ENCODE measurements at regions of chr13 and their contacts with region 1.

Region 1: GRCh38 chr13:27826379-27827353 is 34.4 kb downstream of the GSX1 start:
- DNase-seq: peak; percentile 83
- ATAC-seq: peak; percentile 93
- H3K4me3 ChIP-seq: peak overlapping the region; percentile 21
- H3K27ac ChIP-seq: no peak overlapping the region
- H3K4me1 ChIP-seq: peaks cover 16% of the 10 kb centered on the region
- H3K27me3 ChIP-seq: peaks cover 81% of the 10 kb centered on the region
- CTCF ChIP-seq: peak; percentile 95

Region 2: GRCh38 chr13:27374650-27375049 is 452.0 kb before region 1 on chr13:
- intact Hi-C with region 1: loop called (anchors 10 kb)
- DNase-seq: peak; percentile 58
- ATAC-seq: peak; percentile 92 to 93
- H3K4me3 ChIP-seq: no peak overlapping the region
- H3K27ac ChIP-seq: no peak overlapping the region
- H3K4me1 ChIP-seq: peaks cover 8% of the 10 kb centered on the region
- H3K27me3 ChIP-seq: peaks cover 5% of the 10 kb centered on the region
- CTCF ChIP-seq: peak; percentile 76

Region 3: DNA sequence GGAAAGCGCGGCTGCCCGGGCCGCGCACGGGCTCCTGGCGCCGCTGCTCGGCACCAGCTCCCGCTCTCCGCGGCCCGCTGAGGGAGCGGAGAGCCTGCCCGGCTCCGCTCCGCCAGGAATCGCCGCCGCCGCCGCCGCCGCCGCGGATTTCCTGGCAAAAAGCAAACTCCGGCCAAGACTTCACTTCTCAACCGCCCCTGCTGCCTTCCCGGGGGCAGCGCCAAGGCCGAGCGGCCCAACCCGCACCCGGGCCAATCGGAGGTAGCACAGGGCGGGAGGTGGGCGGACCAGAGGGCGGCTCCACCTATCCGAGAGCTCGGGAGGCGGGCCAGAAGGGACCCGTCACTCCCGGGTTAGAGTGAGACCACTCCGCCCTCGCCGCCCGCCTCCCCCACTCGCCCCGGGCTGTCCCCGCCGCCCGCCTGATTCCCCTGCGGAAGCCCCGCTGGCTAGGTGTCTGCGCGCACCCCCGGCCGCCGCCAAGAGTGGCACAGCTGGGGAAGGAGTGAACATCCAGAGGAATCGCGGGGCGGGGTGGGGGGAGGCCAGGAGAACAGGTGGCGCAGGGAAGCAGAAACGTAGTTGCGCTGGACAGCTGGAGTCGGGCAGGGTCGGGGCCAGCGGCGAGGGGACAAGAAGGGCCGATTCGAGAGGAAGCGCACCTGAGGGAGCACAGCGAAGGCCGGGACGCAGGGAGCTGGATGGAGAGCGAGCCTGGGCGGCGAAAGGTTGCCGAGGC is 206.1 kb before region 1 on chr13 and contains the start of gene LNX2:
- intact Hi-C with region 1: no loop called
- DNase-seq: peak; percentile 98
- ATAC-seq: peak; percentile 88 to 96
- H3K4me3 ChIP-seq: peak within 1 kb of the TSS; percentile 91
- H3K27ac ChIP-seq: peak within 1 kb of the TSS; percentile 96
- H3K4me1 ChIP-seq: peaks cover 51% of the 10 kb centered on the region
- H3K27me3 ChIP-seq: no peaks in the 10 kb centered on the region
- CTCF ChIP-seq: no peak
- total RNA-seq, gene LNX2: 29.7 TPM

Region 4: GRCh38 chr13:27644302-27644701 is 182.4 kb before region 1 on chr13:
- intact Hi-C with region 1: no loop called
- DNase-seq: no peak
- ATAC-seq: peak in 1 of 2 donors; percentile 53
- H3K4me3 ChIP-seq: no peak overlapping the region
- H3K27ac ChIP-seq: no peak overlapping the region
- H3K4me1 ChIP-seq: peaks cover 16% of the 10 kb centered on the region
- H3K27me3 ChIP-seq: no peaks in the 10 kb centered on the region
- CTCF ChIP-seq: no peak

Region 5: DNA sequence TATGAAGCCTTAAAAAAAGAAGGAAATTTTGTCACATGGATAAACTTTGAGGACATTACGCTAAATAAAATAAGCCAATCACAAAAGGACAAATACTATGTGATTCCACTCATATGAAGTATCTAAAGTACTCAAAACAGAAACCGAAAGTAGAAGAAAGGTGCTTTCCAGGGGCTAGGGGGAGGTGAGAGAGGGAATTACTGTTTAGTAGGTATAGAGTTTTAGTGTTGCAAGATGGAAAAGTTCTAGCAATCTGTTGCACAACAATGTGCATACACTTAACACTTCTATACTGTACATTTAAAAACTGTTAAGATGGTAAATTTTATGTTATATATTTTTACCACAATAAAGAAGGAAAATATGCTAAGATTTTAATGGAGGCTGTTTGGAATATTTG is 122.0 kb before region 1 on chr13:
- intact Hi-C with region 1: no loop called
- DNase-seq: no peak
- ATAC-seq: no peak
- H3K4me3 ChIP-seq: no peak overlapping the region
- H3K27ac ChIP-seq: no peak overlapping the region
- H3K4me1 ChIP-seq: no peaks in the 10 kb centered on the region
- H3K27me3 ChIP-seq: no peaks in the 10 kb centered on the region
- CTCF ChIP-seq: no peak

Region 6: GRCh38 chr13:27988520-27988919 is 161.9 kb after region 1 on chr13 and contains the start of gene URAD:
- intact Hi-C with region 1: loop called (anchors 5 kb)
- DNase-seq: no peak
- ATAC-seq: peak in 1 of 2 donors; percentile 61
- H3K4me3 ChIP-seq: no peak within 1 kb of the TSS
- H3K27ac ChIP-seq: no peak within 1 kb of the TSS
- H3K4me1 ChIP-seq: no peaks in the 10 kb centered on the region
- H3K27me3 ChIP-seq: peaks cover 48% of the 10 kb centered on the region
- CTCF ChIP-seq: no peak
- total RNA-seq, gene URAD: not detected

Measured in lower lobe of right lung (tissue), 2 donors.